Right cardiac atrium (tissue), 5 donors: ENCODE measurements at regions of chr5 and their contacts with region 1.

Region 1: DNA sequence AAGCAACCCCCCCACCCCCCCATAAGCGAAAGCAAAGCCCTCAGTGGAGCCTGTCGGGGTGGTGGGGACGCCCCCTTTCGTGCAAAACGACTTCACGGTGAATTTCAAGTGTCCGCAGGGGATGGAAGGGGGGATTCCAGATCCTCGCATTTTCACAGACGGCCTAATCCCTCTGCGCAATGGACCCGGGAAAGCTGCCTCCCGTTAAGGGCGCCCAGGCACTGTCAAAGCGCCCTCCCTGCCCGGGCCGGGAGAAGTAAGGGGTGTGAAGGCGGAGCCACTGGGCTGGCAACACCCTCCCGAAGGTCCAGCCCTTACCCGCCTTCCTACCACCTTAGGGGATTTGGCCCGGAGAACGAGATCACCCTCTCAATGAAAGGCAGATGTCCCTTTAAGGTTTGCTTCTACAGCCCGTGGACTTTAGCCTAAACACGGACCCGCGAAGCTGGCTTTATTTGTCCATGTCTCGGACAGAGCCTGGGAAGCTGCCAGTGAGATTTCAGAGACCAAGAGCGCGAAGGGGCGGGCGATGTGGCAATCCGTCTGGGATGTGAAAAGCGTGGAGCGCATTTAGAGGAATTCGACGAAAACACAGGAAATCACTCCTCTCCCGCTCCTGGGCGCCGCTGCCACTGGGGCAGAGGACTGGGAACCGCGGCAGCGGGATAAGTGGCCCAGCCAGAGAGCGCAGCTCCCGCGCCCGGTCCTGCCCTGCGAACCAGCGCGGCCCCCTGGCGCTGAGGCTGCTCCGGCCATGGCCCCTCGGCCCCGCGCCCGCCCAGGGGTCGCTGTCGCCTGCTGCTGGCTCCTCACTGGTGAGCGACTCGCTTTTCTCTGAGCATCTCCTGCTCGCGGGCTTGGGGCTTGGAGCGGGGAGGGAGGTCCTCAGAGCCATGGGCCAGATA is at the starts of genes ITGA1 and PELO:
- DNase-seq: peak; percentile 87 to 92 (median 92)
- ATAC-seq: peak; percentile 95 to 96
- H3K4me3 ChIP-seq: peak within 1 kb of the TSS; percentile 65
- H3K27ac ChIP-seq: peak within 1 kb of the TSS; percentile 87
- H3K4me1 ChIP-seq: no peaks in the 10 kb centered on the region
- H3K27me3 ChIP-seq: no peaks in the 10 kb centered on the region
- total RNA-seq, gene ITGA1: 22.2 to 42.4 (median 29.4) TPM
- total RNA-seq, gene PELO: 19.1 to 24.3 (median 20.2) TPM

Region 2: DNA sequence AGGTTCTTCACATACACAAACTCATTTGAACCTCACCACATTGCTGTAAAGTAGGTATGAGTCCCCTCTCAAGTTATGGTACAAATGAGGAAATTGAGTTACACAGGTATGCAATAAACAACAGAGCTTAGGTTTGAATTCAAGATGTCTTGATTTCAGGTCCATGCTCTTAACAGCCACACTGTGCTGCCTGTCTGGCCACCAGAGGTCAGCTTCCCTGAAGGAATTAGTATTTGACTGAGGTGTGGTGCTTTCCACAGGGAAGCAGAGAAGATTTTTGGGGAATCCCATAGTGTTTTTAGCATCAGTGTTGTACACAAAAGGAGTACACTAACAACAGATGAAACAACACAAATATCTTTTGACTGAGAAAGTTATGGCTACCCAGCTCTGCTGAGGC is 94.6 kb before region 1 on chr5:
- intact Hi-C with region 1: loop called in 1 of 4 experiments (anchors 5 kb)
- DNase-seq: peak; percentile 34 to 66 (median 50)
- ATAC-seq: peak in 1 of 2 donors; percentile 69
- H3K4me3 ChIP-seq: no peak overlapping the region
- H3K27ac ChIP-seq: no peak overlapping the region
- H3K4me1 ChIP-seq: no peaks in the 10 kb centered on the region
- H3K27me3 ChIP-seq: no peaks in the 10 kb centered on the region

Region 3: DNA sequence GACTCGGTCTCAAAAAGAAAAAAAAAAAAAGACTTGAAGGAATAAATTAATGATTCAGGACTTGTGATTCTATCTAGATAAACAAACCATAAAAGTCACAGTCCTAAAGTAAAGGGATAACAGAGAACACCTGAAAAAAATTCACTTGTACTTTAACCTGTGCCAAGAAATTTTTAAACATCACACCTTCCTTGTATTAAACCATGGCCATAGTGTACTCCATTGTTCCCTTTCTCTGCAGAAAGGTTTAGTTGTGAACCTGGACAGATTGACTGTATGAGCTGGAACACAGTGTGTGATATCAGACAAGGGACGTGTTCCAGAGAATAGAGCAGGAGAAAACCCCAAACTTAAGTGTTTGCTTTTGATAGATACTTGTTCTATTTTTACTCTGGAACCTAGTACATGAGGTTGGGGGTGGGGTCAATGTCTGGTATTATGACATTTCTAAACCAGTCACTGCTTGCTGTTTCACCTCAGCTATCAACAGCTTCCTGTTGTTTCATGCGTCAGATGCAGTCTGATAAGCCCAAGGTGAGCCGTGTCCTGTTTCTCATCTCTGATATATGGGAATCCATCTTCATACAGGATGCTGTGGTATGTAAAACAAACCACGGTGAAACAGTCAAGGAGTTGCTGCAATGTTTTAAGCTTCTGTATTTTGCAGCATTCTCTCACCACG is 62.6 kb before region 1 on chr5:
- intact Hi-C with region 1: no loop called
- DNase-seq: no peak
- ATAC-seq: peak in 1 of 2 donors; percentile 46
- H3K4me3 ChIP-seq: no peak overlapping the region
- H3K27ac ChIP-seq: peak overlapping the region; percentile 29
- H3K4me1 ChIP-seq: no peaks in the 10 kb centered on the region
- H3K27me3 ChIP-seq: no peaks in the 10 kb centered on the region

Region 4: DNA sequence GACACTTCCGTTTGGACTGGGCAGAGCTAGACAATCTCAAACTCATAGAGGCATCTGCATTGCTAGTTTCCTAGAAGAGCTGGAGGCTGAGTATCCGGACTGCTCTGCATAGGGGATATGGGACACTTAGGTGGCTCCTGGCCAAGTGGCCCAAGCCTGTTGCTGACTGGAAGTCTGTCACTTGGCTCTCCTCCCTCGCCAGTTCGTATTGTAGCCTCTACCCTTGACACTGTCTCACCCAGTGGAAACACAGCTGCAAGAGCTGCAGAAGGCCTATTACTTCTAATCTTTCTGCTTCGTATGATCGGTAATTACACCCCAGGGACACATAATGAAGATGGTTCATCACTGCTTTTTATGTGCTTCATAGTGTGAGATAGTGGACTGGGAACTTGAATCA is 34.6 kb after region 1 on chr5:
- intact Hi-C with region 1: no loop called
- DNase-seq: peak; percentile 84 to 93 (median 90)
- ATAC-seq: peak; percentile 96 to 97
- H3K4me3 ChIP-seq: no peak overlapping the region
- H3K27ac ChIP-seq: peak overlapping the region; percentile 59
- H3K4me1 ChIP-seq: peaks cover 5% of the 10 kb centered on the region
- H3K27me3 ChIP-seq: no peaks in the 10 kb centered on the region

Region 5: GRCh38 chr5:52915176-52915875 is 127.5 kb after region 1 on chr5:
- intact Hi-C with region 1: loop called in 3 of 4 experiments (anchors 5 kb)
- DNase-seq: peak in 2 of 3 donors; percentile 13 to 48
- ATAC-seq: peak; percentile 92 to 94
- H3K4me3 ChIP-seq: peak overlapping the region; percentile 44
- H3K27ac ChIP-seq: no peak overlapping the region
- H3K4me1 ChIP-seq: no peaks in the 10 kb centered on the region
- H3K27me3 ChIP-seq: no peaks in the 10 kb centered on the region

Region 6: GRCh38 chr5:53114988-53115387 is 327.1 kb after region 1 on chr5:
- intact Hi-C with region 1: no loop called
- DNase-seq: no peak
- ATAC-seq: no peak
- H3K4me3 ChIP-seq: no peak overlapping the region
- H3K27ac ChIP-seq: no peak overlapping the region
- H3K4me1 ChIP-seq: no peaks in the 10 kb centered on the region
- H3K27me3 ChIP-seq: no peaks in the 10 kb centered on the region